AG04449 (cell line): ENCODE measurements at regions of chr7 and their contacts with region 1.

Region 1: DNA sequence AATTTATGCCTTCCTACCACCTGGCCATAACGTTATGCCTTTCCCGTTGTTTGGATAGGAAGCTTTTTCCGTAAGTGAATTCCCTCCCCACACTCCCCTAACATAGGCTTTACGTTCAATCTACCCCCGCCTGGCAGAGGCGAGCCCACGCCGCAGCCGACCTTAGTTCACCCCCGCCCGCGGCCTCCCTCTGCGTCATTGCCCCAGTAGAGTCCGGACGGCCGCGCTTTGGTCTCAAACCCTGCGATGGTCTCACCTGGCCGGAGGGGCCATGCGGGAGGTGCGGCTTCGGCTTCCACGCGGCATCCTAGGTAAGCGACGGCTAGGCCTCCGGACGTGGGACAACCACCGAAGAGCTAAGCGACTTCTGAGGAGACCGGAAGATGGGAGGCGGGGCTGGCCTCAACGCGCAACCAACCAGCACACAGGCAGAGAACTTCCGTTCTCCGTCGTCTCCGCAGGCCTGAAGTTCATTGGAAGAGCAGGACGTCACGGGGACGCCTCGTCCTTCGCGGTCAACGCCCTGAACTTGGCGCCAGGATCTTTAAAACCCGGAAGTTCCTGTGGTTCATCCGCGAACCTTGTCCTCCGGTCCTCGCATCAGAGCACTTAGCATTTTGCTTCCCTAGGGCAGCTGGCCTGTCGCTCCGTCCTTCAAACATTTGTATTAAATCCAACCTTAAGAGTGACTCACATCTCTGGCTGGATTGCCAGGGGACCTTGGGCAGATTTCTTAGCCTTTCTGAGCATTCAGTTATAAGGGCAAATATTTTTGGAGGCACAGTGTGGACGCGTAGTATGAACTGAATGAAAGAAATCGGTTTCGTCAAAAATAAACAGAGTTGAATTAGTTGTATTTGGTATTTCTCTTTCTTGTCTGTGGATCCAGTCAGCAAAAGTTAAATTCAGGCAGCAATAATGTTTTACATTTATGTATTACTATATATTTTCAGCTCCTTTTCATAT is at the start of gene CHCHD2:
- DNase-seq: peak; percentile 93
- H3K4me3 ChIP-seq: peak within 1 kb of the TSS; percentile 93
- CTCF ChIP-seq: no peak

Region 2: GRCh38 chr7:56092789-56093531 is 13.4 kb before region 1 on chr7 and contains the start of gene PHKG1:
- CTCF ChIA-PET with region 1: interaction called, 10 read pairs
- POLR2A ChIA-PET with region 1: no interaction called
- DNase-seq: peak; percentile 44
- H3K4me3 ChIP-seq: no peak within 1 kb of the TSS
- CTCF ChIP-seq: peak; percentile 29

Region 3: DNA sequence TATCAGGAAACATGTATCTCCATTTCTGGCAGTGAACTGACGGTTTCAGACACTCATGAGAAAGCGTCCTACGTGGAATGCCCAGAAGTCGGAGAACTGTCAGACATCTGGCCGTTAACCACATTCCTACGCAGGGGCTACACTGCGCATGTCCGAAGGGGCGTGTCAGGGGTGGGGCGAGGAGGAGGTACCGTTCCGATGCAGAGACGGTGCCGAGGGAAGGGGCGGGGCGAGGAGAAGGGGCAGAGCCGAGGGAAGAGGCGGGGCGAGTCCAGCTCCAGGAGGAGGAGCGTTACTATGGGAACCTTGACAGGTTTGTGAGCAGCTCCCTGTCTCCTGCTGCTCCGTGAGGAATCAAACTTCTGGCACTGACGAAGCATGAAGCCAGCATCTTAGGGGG is 376.8 kb after region 1 on chr7:
- CTCF ChIA-PET with region 1: no interaction called
- POLR2A ChIA-PET with region 1: no interaction called
- DNase-seq: no peak
- H3K4me3 ChIP-seq: no peak overlapping the region
- CTCF ChIP-seq: no peak